A549 (cell line): ENCODE measurements at regions of chr1 and their contacts with region 1.

Region 1: GRCh38 chr1:153572569-153573015 is 6.9 kb upstream of the S100A2 start:
- DNase-seq: peak; percentile 78 to 86
- ATAC-seq: peak; percentile 78 to 84
- H3K4me3 ChIP-seq: no peak overlapping the region
- H3K27ac ChIP-seq: peak overlapping the region in 1 of 2 experiments; percentile 39; a peak in 1 of 6 replicates
- H3K4me1 ChIP-seq: peaks cover 27% of the 10 kb centered on the region
- CTCF ChIP-seq: peak; percentile 92
- EP300 ChIP-seq: no peak
- POLR2A ChIP-seq: no peak
- RAD21 ChIP-seq: peak; percentile 95 to 99

Region 2: DNA sequence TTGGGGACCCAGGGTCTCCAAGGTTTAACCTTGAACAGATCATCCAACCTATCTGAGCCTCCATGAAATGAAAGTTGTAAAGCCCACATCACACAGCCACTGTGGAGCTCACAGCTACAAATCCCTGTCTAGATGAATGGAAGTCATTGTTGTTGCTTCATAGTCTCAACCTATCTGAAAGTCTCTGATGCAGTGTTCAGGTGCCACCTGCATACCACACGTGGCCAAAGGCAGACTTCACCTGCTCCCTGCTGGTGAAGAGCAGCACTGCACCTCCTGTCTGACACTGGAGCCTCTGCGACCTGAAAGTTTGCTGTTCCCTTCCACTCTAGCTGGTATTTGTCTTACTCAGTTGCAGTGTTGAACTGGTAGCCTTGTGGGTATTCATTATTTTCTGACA is 294.8 kb before region 1 on chr1:
- CTCF ChIA-PET with region 1: no interaction called
- POLR2A ChIA-PET with region 1: no interaction called
- DNase-seq: peak; percentile 33 to 43
- ATAC-seq: peak; percentile 74 to 88; a peak in 5 of 6 replicates
- H3K4me3 ChIP-seq: no peak overlapping the region
- H3K27ac ChIP-seq: no peak overlapping the region
- H3K4me1 ChIP-seq: no peaks in the 10 kb centered on the region
- CTCF ChIP-seq: peak; percentile 32
- EP300 ChIP-seq: no peak
- POLR2A ChIP-seq: no peak
- RAD21 ChIP-seq: peak; percentile 18 to 56; a peak in 2 of 5 replicates

Region 3: GRCh38 chr1:153510984-153511410 is 61.6 kb before region 1 on chr1:
- CTCF ChIA-PET with region 1: interaction called, 273 read pairs
- POLR2A ChIA-PET with region 1: no interaction called
- DNase-seq: peak; percentile 84 to 88
- ATAC-seq: peak; percentile 73 to 85
- H3K4me3 ChIP-seq: no peak overlapping the region
- H3K27ac ChIP-seq: peak overlapping the region; percentile 72 to 87
- H3K4me1 ChIP-seq: peaks cover 43% of the 10 kb centered on the region
- CTCF ChIP-seq: peak; percentile 94
- EP300 ChIP-seq: no peak
- POLR2A ChIP-seq: no peak
- RAD21 ChIP-seq: peak; percentile 99 to 100

Region 4: DNA sequence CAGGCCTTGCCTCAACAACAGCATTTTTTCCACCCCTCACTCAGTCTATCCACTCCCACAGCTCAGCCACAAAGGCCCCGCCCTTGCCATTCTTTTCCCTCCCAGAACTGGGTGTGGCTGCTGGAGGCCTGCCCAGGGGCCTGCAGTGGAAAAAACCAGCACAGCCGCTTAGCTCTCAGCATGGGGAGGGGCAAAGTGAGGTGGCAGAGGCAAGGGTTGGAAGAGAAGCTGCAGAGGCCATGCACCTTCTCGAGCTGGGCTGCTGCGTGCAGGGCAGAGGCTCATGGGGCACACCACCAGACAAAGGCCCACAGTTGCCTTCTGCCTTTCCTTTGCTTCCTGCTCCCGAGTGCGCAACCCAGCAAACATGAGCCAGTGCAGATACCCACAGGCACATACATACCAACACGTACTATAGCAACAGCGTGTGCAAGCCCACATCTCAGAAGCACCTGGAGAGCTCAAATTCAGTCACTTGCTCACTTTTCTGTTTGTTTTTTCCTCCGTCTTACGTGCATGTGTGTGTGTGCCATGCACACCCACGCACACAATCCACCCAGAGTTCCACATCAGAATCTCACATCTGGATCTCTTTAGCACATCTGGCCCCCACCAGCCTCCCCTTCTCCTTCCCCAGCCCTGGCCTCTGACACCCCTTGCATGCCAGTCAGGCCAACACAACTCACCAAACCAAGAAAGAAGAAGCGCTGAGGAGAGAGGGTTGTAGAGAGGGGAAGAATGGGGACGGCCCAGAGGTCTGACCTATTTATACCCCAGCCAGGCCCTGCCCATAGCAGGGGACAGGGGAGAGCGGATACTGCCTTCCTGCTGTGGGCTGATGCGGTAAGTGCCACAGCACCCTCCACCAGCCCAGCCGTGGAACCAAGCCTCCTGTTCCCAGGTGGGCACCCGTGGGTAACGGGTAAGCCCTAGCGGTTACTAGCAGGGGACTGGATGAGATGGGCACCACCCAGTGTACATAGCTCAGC is 27.2 kb before region 1 on chr1 and contains the start of gene S100A4:
- CTCF ChIA-PET with region 1: interaction called, 471 read pairs
- POLR2A ChIA-PET with region 1: interaction called, 6 read pairs
- DNase-seq: peak; percentile 94 to 97
- ATAC-seq: peak; percentile 70 to 79
- H3K4me3 ChIP-seq: peak within 1 kb of the TSS; percentile 62
- H3K27ac ChIP-seq: peak within 1 kb of the TSS; percentile 96 to 97
- H3K4me1 ChIP-seq: peaks cover 96% of the 10 kb centered on the region
- CTCF ChIP-seq: no peak
- EP300 ChIP-seq: no peak
- POLR2A ChIP-seq: peak; percentile 85
- RAD21 ChIP-seq: peak; percentile 12 to 24; a peak in 2 of 5 replicates
- polyA plus RNA-seq, gene S100A4: 590 and 814 TPM in 2 replicates

Region 5: GRCh38 chr1:153598309-153599172 is 25.9 kb after region 1 on chr1:
- CTCF ChIA-PET with region 1: interaction called, 41 read pairs
- POLR2A ChIA-PET with region 1: no interaction called
- DNase-seq: no peak
- ATAC-seq: no peak; a peak in 2 of 6 replicates
- H3K4me3 ChIP-seq: no peak overlapping the region
- H3K27ac ChIP-seq: no peak overlapping the region
- H3K4me1 ChIP-seq: peaks cover 9% of the 10 kb centered on the region
- CTCF ChIP-seq: no peak
- EP300 ChIP-seq: no peak
- POLR2A ChIP-seq: no peak
- RAD21 ChIP-seq: no peak

Region 6: GRCh38 chr1:153633716-153634665 is 61.4 kb after region 1 on chr1 and contains the start of gene CHTOP:
- CTCF ChIA-PET with region 1: interaction called, 253 read pairs
- POLR2A ChIA-PET with region 1: interaction called, 24 read pairs
- DNase-seq: peak; percentile 97 to 99
- ATAC-seq: peak; percentile 89 to 94
- H3K4me3 ChIP-seq: peak within 1 kb of the TSS; percentile 90
- H3K27ac ChIP-seq: peak within 1 kb of the TSS; percentile 99 to 100
- H3K4me1 ChIP-seq: peaks cover 25% of the 10 kb centered on the region
- CTCF ChIP-seq: no peak
- EP300 ChIP-seq: no peak
- POLR2A ChIP-seq: peak; percentile 63
- RAD21 ChIP-seq: no peak
- polyA plus RNA-seq, gene CHTOP: 81.6 and 98.1 TPM in 2 replicates

Region 7: DNA sequence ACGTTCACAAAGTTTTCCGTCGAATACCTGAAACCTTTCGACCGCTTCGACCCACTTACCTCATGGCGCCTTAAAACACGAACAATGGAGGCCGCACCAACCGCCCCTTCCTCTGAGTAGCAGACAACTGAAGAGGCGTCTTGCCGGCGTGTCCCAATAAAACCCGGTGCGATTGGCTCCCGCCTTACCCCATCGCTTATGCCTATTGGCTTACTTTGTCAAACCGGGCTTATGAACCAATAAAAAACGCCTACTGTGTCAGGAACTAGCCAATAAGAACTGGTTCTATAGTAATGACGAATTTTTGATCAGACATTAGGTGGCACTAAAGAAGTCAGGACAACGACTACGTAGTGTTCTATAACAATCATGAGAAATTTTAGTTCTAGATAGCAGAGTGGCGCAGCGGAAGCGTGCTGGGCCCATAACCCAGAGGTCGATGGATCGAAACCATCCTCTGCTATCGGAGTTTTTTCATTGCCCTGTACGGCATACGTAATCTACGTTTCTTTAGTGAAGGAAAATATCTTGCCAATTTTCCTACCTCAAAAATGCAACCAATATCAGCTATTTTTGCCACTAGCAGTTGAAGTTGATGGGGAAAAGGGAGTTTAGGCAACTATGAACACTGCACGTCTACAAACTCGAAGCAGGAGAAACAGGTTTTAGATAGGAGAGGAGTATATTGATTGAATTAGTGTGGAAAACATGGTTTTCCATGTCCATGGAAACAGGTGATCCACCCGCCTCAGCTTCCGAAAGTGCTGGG is 98.5 kb after region 1 on chr1 and contains the start of gene ILF2:
- CTCF ChIA-PET with region 1: interaction called, 15 read pairs
- POLR2A ChIA-PET with region 1: interaction called, 7 read pairs
- DNase-seq: peak; percentile 100
- ATAC-seq: peak; percentile 94 to 98
- H3K4me3 ChIP-seq: peak within 1 kb of the TSS; percentile 78
- H3K27ac ChIP-seq: peak within 1 kb of the TSS; percentile 82 to 90
- H3K4me1 ChIP-seq: peaks cover 10% of the 10 kb centered on the region
- CTCF ChIP-seq: peak; percentile 49
- EP300 ChIP-seq: no peak
- POLR2A ChIP-seq: peak; percentile 84
- RAD21 ChIP-seq: no peak
- polyA plus RNA-seq, gene ILF2: 285 and 339 TPM in 2 replicates